AG04449 (cell line): ENCODE measurements at regions of chr6 and their contacts with region 1.

Region 1: GRCh38 chr6:131129689-131130545 is 5.3 kb upstream of the AKAP7 start:
- DNase-seq: no peak
- H3K4me3 ChIP-seq: no peak overlapping the region
- CTCF ChIP-seq: no peak

Region 2: DNA sequence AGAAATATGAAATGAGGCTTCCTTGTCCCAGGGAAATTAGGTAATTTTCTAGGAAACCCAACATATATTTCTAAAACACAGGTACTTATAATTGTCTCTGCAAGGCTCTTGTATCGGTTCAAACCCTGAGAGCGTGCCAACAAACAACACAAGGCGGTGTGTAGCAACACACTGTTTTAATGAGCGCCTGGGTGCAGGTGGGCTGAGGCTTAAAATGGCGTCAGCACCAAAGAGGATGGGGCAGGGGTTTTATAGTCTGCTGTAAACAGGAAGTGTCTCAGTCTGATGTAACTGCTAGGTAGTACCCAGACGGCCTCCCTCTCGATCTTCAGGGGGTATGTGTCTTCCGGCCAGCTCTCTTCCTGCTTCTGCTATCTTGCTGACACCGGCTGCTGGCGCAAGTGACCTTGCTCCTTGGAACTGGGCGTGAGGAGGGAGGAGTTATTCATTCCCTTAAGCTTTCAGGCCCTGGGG is 136.6 kb before region 1 on chr6:
- CTCF ChIA-PET with region 1: no interaction called
- POLR2A ChIA-PET with region 1: no interaction called
- DNase-seq: no peak
- H3K4me3 ChIP-seq: no peak overlapping the region
- CTCF ChIP-seq: no peak

Region 3: GRCh38 chr6:131101911-131102680 is 27.8 kb before region 1 on chr6:
- CTCF ChIA-PET with region 1: no interaction called
- POLR2A ChIA-PET with region 1: no interaction called
- DNase-seq: no peak
- H3K4me3 ChIP-seq: no peak overlapping the region
- CTCF ChIP-seq: no peak

Region 4: DNA sequence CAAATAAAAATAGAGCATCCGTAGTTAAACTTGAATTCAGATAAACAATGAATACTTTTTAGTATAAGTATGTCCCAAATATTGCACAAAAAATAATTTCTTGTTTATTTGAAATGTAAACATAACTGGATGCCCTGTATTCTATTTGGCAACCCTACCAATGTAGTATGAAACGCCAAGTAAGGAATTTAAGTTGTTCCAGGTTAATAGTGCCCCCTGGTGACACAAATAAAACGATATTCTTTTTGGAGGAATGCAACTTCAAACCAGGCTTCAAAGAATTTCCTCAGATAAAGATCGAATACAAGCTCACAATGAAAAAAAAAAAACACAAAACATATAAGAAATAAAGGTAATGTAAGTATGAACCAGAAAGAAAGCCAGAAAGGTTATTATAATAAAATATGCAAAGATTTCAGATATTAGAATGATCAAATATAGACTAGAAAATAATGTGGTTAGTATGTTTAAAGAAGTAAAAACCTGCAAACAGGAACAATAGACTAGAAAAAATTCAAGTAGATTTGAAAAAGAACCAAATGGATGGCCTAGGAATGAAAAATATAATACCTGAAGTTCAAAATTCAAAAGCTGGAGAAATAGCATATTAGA is 13.1 kb before region 1 on chr6:
- CTCF ChIA-PET with region 1: interaction called, 12 read pairs
- POLR2A ChIA-PET with region 1: no interaction called
- DNase-seq: no peak
- H3K4me3 ChIP-seq: no peak overlapping the region
- CTCF ChIP-seq: no peak

Region 5: DNA sequence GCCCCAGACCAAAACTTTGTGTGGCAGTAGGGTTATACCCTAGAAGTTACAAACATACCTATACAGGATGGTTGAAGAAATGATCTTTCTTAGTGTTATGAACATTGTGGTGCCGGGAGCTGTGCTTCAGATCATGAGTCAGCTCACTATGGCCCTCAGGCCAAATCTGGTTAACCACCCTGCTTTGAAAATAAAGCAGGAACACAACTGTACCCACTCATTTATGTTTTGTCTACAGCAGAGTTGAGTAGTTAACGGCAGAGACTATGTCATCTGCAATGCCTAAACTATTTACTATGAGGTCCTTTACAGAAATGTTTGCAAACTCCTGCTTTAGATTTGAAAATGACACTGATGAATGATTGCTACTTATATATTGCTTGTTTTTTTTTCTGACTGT is 29.7 kb after region 1 on chr6:
- CTCF ChIA-PET with region 1: no interaction called
- POLR2A ChIA-PET with region 1: no interaction called
- DNase-seq: peak; percentile 40
- H3K4me3 ChIP-seq: no peak overlapping the region
- CTCF ChIP-seq: no peak